PC-9 (cell line): ENCODE measurements at regions of chr1 and their contacts with region 1.

Region 1: GRCh38 chr1:13748610-13749505 is 48.9 kb downstream of the PRDM2 start:
- DNase-seq: peak; percentile 82 to 94
- H3K4me3 ChIP-seq: peak overlapping the region; percentile 66
- H3K27ac ChIP-seq: no peak overlapping the region
- H3K4me1 ChIP-seq: peaks cover 17% of the 10 kb centered on the region
- H3K27me3 ChIP-seq: no peaks in the 10 kb centered on the region
- CTCF ChIP-seq: no peak

Region 2: GRCh38 chr1:13451399-13451965 is 297.4 kb before region 1 on chr1:
- CTCF ChIA-PET with region 1: no interaction called
- POLR2A ChIA-PET with region 1: no interaction called
- intact Hi-C with region 1: no loop called
- DNase-seq: no peak
- H3K4me3 ChIP-seq: no peak overlapping the region
- H3K27ac ChIP-seq: no peak overlapping the region
- H3K4me1 ChIP-seq: no peaks in the 10 kb centered on the region
- H3K27me3 ChIP-seq: peaks cover 11% of the 10 kb centered on the region; the same call in 1 of the 2 replicates
- CTCF ChIP-seq: no peak

Region 3: GRCh38 chr1:13759088-13759487 is 10.2 kb after region 1 on chr1:
- CTCF ChIA-PET with region 1: no interaction called
- POLR2A ChIA-PET with region 1: interaction called, 11 read pairs
- intact Hi-C with region 1: loop called (anchors 1 kb)
- DNase-seq: peak; percentile 44 to 89
- H3K4me3 ChIP-seq: peak overlapping the region; percentile 49; the same call in 1 of the 2 replicates
- H3K27ac ChIP-seq: peak overlapping the region; percentile 94
- H3K4me1 ChIP-seq: peaks cover 50% of the 10 kb centered on the region
- H3K27me3 ChIP-seq: no peaks in the 10 kb centered on the region
- CTCF ChIP-seq: no peak

Region 4: GRCh38 chr1:13792419-13792818 is 43.6 kb after region 1 on chr1:
- CTCF ChIA-PET with region 1: no interaction called
- POLR2A ChIA-PET with region 1: interaction called, 10 read pairs
- intact Hi-C with region 1: no loop called
- DNase-seq: no peak
- H3K4me3 ChIP-seq: no peak overlapping the region
- H3K27ac ChIP-seq: no peak overlapping the region
- H3K4me1 ChIP-seq: no peaks in the 10 kb centered on the region
- H3K27me3 ChIP-seq: no peaks in the 10 kb centered on the region
- CTCF ChIP-seq: no peak

Region 5: GRCh38 chr1:13813398-13814012 is 64.6 kb after region 1 on chr1:
- CTCF ChIA-PET with region 1: no interaction called
- POLR2A ChIA-PET with region 1: no interaction called
- intact Hi-C with region 1: loop called (anchors 5 kb)
- DNase-seq: no peak
- H3K4me3 ChIP-seq: no peak overlapping the region
- H3K27ac ChIP-seq: no peak overlapping the region
- H3K4me1 ChIP-seq: no peaks in the 10 kb centered on the region
- H3K27me3 ChIP-seq: no peaks in the 10 kb centered on the region
- CTCF ChIP-seq: peak; percentile 62

Region 6: DNA sequence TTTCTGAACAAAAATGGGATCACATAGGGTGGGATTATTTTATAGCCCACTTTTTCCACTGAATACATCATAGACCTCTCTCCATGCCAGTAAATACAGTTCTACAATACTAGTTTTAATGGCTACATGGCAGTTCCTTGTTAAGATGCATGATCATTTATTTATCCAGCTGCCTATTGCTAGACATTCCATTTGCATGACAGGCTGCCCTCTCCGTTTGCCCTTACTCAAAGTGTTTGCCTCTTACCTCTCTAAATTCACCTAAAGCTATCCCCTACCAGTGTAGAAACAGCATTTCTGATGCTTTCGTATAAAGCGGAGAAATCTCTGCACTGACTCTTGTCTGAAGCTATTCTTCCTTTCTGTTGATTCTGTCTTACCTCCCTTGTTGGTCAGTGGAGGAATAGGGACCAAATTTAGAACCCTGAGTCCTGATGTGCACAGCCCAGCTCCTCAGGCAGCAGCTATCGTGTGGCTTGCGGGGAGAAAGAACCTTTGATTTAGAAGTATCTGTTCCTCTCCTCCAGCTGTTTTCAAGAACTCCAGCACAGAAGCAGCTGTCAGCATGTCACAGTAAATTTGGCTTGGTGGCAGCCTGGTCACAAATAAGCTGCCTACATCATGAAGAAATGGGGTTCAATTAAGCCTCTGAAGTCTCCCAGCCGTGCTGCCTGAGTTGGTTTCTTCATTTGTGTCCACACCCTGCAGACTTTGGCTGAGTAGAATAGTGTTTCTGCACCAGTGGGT is 288.4 kb after region 1 on chr1:
- CTCF ChIA-PET with region 1: no interaction called
- POLR2A ChIA-PET with region 1: no interaction called
- intact Hi-C with region 1: no loop called
- DNase-seq: no peak
- H3K4me3 ChIP-seq: no peak overlapping the region
- H3K27ac ChIP-seq: no peak overlapping the region
- H3K4me1 ChIP-seq: no peaks in the 10 kb centered on the region
- H3K27me3 ChIP-seq: no peaks in the 10 kb centered on the region
- CTCF ChIP-seq: no peak